ENCODE measurements at regions of chr10 and their contacts with region 1.

Region 1: GRCh38 chr10:7318836-7319235 is 92.0 kb downstream of the SFMBT2 start:
- DNase-seq: peak in 3 of 9 donors; percentile 10 to 29 (median 14)
- ATAC-seq: no peak
- H3K4me3 ChIP-seq: no peak overlapping the region
- H3K4me3 Mint-ChIP-seq: peak overlapping the region in 9 of 10 donors; percentile 43 to 84 (median 67)
- H3K27ac ChIP-seq: no peak overlapping the region
- H3K27ac Mint-ChIP-seq: peak overlapping the region in 8 of 9 donors; percentile 27 to 90 (median 74)
- H3K4me1 ChIP-seq: peaks cover 23 to 33% of the 10 kb centered on the region in 2 donors
- H3K4me1 Mint-ChIP-seq: peaks cover 45 to 84% (median 75%) of the 10 kb centered on the region in 7 donors
- H3K27me3 ChIP-seq: no peaks in the 10 kb centered on the region
- H3K27me3 Mint-ChIP-seq: no peaks in the 10 kb centered on the region

Region 2: DNA sequence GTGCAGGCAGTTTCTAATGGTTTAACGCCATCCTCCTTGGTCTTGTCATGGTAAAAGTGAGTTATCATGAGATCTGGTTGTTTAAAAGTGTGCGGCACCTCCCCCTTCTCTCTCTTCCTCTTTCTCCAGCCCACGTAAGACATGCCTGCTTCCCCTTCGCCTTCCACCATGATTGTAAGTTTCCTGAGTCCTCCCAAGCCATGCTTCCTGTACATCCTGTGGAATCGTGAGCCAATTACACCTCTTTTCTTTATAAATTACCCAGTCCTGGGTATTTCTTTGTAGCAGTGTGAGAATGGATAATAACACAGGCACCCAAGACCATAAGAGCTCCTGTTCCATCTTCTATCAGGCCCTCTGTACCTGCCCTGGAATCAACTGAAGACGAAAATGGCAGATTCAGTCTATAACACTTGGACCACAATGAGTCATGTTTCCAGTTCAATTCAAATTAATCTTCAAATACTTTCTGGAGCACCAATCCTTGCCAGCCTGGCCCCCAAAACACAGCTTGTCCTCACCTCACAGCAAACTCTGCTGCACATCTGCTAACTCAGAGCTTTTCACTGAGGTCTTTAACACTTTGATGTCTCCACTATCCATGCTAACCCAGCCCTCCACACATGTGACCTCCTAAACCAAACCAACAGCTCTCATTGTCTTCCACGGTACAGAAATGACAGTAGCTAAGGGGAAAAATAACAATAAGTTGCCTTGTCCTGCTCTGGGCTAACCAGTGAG is 18.8 kb after region 1 on chr10:
- CTCF ChIA-PET with region 1: no interaction called
- POLR2A ChIA-PET with region 1: interaction called, 3 read pairs
- intact Hi-C with region 1: loop called in 1 of 2 experiments (anchors 2 kb)
- DNase-seq: no peak
- ATAC-seq: peak; percentile 45
- H3K4me3 ChIP-seq: no peak overlapping the region
- H3K4me3 Mint-ChIP-seq: peak overlapping the region in 2 of 10 donors; percentile 10 to 33
- H3K27ac ChIP-seq: no peak overlapping the region
- H3K27ac Mint-ChIP-seq: peak overlapping the region in 4 of 9 donors; percentile 20 to 73 (median 46)
- H3K4me1 ChIP-seq: no peaks in the 10 kb centered on the region
- H3K4me1 Mint-ChIP-seq: peaks cover 32 to 89% (median 76%) of the 10 kb centered on the region in 7 donors
- H3K27me3 ChIP-seq: no peaks in the 10 kb centered on the region
- H3K27me3 Mint-ChIP-seq: no peaks in the 10 kb centered on the region

Measured in naive thymus-derived CD4-positive, alpha-beta T cell (primary cell).